ENCODE measurements at regions of chr10 and their contacts with region 1.

Region 1: DNA sequence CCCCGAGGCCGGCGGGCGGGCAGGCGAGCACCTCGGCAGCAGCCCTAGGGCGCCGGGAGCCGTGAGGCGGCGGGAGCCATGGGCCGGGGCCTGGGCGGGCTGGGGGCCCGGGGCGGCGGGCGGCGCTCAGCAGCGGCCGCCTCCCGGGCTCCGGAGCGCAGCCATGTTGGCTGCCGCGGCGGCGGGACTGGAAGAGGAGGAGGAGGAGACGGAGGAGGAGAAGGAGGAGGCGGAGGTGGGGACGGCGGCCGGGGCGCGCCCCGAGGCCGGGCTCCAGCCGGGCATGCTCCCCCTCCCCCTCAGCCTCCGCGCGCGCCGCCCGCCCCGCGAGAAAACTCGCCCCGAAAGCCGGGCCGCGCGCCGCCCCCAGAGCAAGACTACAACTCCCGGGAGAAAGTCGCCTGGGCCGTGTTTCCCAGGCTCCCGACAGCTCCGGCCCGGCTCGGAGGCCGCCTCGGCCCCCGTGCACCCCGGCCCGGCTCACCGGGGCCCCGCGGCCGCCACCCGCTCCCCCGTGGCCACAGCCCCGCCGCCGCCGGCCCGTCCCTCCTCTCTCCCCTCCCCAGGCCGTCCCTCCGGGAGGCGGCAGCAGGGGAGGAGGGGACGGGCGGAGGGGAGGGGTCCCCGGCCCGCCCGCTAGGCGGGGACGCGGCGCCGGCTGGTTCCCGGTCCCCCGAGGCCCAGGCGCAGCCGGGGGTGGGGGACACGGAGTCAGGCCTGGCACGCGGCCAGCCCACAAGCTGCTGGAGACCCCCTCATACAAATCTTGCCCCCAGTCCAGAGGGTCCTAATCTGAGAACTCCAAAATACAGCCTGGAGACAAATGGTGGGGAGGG is at the start of gene DLG5:
- DNase-seq: no peak
- H3K4me3 ChIP-seq: peak within 1 kb of the TSS; percentile 71 to 98 (median 93)
- H3K27ac ChIP-seq: peak within 1 kb of the TSS; percentile 90 to 92 (median 91)
- H3K4me1 ChIP-seq: peaks cover 24 to 57% (median 51%) of the 10 kb centered on the region in 4 donors
- H3K27me3 ChIP-seq: no peaks in the 10 kb centered on the region
- CTCF ChIP-seq: no peak
- EP300 ChIP-seq: no peak
- POLR2A ChIP-seq: no peak
- total RNA-seq, gene DLG5: 55.7 to 120 (median 76.6) TPM

Region 2: DNA sequence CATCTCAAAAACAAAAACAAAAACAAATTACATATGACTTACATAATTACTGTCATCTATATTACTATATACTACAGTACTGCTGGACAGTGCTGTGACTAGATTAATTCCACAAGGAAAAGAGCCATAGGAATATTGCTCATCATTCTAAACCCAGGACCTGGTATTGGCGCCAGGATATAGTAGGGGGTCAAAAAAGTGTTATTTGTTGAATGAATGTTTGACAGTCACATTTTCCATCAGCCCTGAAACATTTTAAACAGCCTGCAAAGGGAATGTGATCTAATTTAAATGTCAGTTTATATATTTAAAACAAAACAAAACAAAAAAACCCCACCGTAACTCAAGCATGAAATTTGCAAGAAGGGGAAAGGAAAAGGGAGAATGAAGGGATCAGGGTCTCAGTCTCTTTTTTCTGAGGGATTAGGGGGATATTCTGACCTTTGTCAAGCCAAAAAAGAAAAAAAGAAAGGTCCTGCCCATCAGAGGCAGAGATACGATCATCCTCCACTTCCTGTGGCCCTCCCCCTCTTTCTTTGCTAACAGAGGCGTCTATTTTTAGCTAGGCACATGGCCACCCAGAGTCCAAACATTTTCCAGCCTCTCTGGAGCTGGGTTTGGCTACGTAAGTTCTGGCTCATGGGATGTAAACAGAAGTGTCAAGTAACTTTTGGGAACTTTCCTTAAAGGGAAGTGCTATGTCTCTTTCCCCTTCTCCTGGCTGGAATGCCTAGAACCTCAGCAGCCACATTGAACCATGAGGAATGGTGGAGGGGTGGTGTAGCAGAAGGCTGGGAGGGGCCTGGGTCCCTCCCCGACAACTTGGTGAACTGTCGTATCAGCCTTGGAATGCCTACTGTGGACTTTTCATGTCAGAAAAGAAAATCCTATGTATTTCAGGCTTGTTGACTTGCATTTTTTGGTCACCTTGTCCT is 44.4 kb after region 1 on chr10:
- intact Hi-C with region 1: loop called (anchors 5 kb)
- DNase-seq: peak; percentile 96
- H3K4me3 ChIP-seq: peak overlapping the region in 3 of 4 donors; percentile 4 to 32 (median 24)
- H3K27ac ChIP-seq: peak overlapping the region; percentile 81 to 94 (median 84)
- H3K4me1 ChIP-seq: peaks cover 14 to 63% (median 61%) of the 10 kb centered on the region in 4 donors
- H3K27me3 ChIP-seq: no peaks in the 10 kb centered on the region
- CTCF ChIP-seq: no peak
- EP300 ChIP-seq: peak; percentile 95
- POLR2A ChIP-seq: no peak

Measured in esophagus muscularis mucosa (tissue), 4 donors.